ENCODE measurements at regions of chr2 and their contacts with region 1.

Region 1: DNA sequence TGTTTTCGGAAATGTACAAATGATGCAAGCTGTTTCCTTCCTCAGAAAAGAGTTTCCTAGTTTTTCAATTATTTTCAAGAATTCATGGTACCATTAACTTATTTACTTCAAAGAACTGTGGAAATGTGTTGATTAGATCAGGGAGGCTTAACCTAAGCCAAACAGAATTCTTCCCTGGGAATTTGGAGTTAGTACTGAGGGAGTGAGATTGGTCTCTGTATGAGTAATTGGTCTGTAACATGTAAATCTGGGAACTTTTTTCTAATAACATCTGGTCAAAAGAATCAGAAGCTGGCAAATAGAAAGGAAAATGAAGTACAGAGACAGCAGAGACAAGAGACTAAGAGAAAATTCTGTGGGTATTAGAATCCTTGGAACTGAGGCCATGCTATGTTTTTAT is 145.8 kb downstream of the BABAM2 start:
- DNase-seq: no peak
- H3K4me3 ChIP-seq: no peak overlapping the region
- H3K27ac ChIP-seq: no peak overlapping the region
- H3K4me1 ChIP-seq: no peaks in the 10 kb centered on the region
- H3K27me3 ChIP-seq: no peaks in the 10 kb centered on the region
- CTCF ChIP-seq: no peak
- EP300 ChIP-seq: no peak
- POLR2A ChIP-seq: no peak

Region 2: GRCh38 chr2:27966483-27966882 is 69.8 kb before region 1 on chr2:
- in situ Hi-C with region 1: no loop called
- intact Hi-C with region 1: loop called (anchors 2 kb)
- DNase-seq: no peak
- H3K4me3 ChIP-seq: no peak overlapping the region
- H3K27ac ChIP-seq: no peak overlapping the region
- H3K4me1 ChIP-seq: peaks cover 0 to 8% (median 4%) of the 10 kb centered on the region in 4 donors
- H3K27me3 ChIP-seq: no peaks in the 10 kb centered on the region
- CTCF ChIP-seq: no peak
- EP300 ChIP-seq: no peak
- POLR2A ChIP-seq: no peak

Measured in transverse colon (tissue), 4 donors.